ENCODE measurements at regions of chr11 and their contacts with region 1.

Region 1: GRCh38 chr11:129323896-129324512 is 51.6 kb upstream of the BARX2 start:
- DNase-seq: peak; percentile 29 to 32
- ATAC-seq: peak; percentile 80 to 89 (median 86)
- H3K4me3 ChIP-seq: peak overlapping the region in 6 of 10 donors; percentile 2 to 27 (median 12)
- H3K27ac ChIP-seq: peak overlapping the region; percentile 0 to 61 (median 48)
- H3K4me1 ChIP-seq: peaks cover 0 to 36% (median 16%) of the 10 kb centered on the region in 9 donors
- H3K27me3 ChIP-seq: peaks cover 0 to 3% (median 0%) of the 10 kb centered on the region in 7 donors
- CTCF ChIP-seq: no peak

Region 2: DNA sequence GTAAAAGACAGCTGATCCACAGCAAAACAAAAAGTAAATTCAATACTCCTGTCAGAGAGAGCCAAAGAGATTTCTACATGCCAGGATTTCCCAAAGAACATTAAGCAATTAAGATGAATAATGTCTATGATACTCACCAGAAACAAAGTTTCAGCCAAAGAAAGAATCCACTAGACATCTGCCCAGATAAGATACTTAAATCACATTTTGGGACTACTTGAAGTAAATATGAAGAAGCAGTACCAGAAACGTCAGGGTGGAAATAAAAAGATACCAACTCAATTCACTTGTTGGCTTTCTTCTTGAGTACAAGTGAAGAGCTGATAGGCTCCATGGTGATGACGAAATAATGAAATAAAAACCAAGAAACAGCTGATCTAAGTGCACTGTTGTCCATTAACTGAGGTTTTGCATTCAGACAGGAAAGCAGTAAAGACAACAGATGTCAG is 100.3 kb before region 1 on chr11:
- intact Hi-C with region 1: loop called in 1 of 10 experiments (anchors 10 kb)
- DNase-seq: no peak
- ATAC-seq: peak in 1 of 8 donors; percentile 72
- H3K4me3 ChIP-seq: no peak overlapping the region
- H3K27ac ChIP-seq: peak overlapping the region in 2 of 10 donors; percentile 24 to 34
- H3K4me1 ChIP-seq: peaks cover 0 to 5% (median 0%) of the 10 kb centered on the region in 9 donors
- H3K27me3 ChIP-seq: no peaks in the 10 kb centered on the region
- CTCF ChIP-seq: no peak

Region 3: GRCh38 chr11:129279326-129280026 is 44.5 kb before region 1 on chr11:
- intact Hi-C with region 1: loop called in 1 of 10 experiments (anchors 5 kb)
- DNase-seq: peak; percentile 69 to 86
- ATAC-seq: peak; percentile 89 to 97 (median 92)
- H3K4me3 ChIP-seq: peak overlapping the region in 9 of 10 donors; percentile 39 to 71 (median 60)
- H3K27ac ChIP-seq: peak overlapping the region in 7 of 10 donors; percentile 1 to 61 (median 39)
- H3K4me1 ChIP-seq: peaks cover 0 to 40% (median 18%) of the 10 kb centered on the region in 9 donors
- H3K27me3 ChIP-seq: no peaks in the 10 kb centered on the region
- CTCF ChIP-seq: peak in 1 of 9 donors; percentile 15

Measured in heart right ventricle (tissue), 16 donors.